Activated CD4-positive, alpha-beta memory T cell treated with anti-CD3 and anti-CD28 coated beads for 36 hours (primary cell): ENCODE measurements at regions of chrX and their contacts with region 1.

Region 1: GRCh38 chrX:23732704-23733103 is 10.4 kb downstream of the ACOT9 start:
- DNase-seq: no peak
- H3K4me3 Mint-ChIP-seq: peak overlapping the region; percentile 7
- H3K27ac Mint-ChIP-seq: peak overlapping the region; percentile 92
- H3K4me1 Mint-ChIP-seq: peaks cover 33% of the 10 kb centered on the region
- H3K27me3 Mint-ChIP-seq: no peaks in the 10 kb centered on the region

Region 2: GRCh38 chrX:23704673-23705206 is 28.0 kb before region 1 on chrX:
- CTCF ChIA-PET with region 1: no interaction called
- POLR2A ChIA-PET with region 1: no interaction called
- intact Hi-C with region 1: loop called (anchors 2 kb)
- DNase-seq: no peak
- H3K4me3 Mint-ChIP-seq: no peak overlapping the region
- H3K27ac Mint-ChIP-seq: peak overlapping the region; percentile 82
- H3K4me1 Mint-ChIP-seq: peaks cover 11% of the 10 kb centered on the region
- H3K27me3 Mint-ChIP-seq: no peaks in the 10 kb centered on the region

Region 3: GRCh38 chrX:23742697-23743622 is 10.3 kb after region 1 on chrX and contains the start of gene ACOT9:
- CTCF ChIA-PET with region 1: interaction called, 3 read pairs
- POLR2A ChIA-PET with region 1: interaction called, 4 read pairs
- intact Hi-C with region 1: loop called (anchors 1 kb)
- DNase-seq: peak; percentile 87
- H3K4me3 Mint-ChIP-seq: peak within 1 kb of the TSS; percentile 86
- H3K27ac Mint-ChIP-seq: peak within 1 kb of the TSS; percentile 86
- H3K4me1 Mint-ChIP-seq: peaks cover 32% of the 10 kb centered on the region
- H3K27me3 Mint-ChIP-seq: no peaks in the 10 kb centered on the region
- total RNA-seq, gene ACOT9: 50.2 to 52.1 TPM